ENCODE measurements at regions of chr16 and their contacts with region 1.

Region 1: DNA sequence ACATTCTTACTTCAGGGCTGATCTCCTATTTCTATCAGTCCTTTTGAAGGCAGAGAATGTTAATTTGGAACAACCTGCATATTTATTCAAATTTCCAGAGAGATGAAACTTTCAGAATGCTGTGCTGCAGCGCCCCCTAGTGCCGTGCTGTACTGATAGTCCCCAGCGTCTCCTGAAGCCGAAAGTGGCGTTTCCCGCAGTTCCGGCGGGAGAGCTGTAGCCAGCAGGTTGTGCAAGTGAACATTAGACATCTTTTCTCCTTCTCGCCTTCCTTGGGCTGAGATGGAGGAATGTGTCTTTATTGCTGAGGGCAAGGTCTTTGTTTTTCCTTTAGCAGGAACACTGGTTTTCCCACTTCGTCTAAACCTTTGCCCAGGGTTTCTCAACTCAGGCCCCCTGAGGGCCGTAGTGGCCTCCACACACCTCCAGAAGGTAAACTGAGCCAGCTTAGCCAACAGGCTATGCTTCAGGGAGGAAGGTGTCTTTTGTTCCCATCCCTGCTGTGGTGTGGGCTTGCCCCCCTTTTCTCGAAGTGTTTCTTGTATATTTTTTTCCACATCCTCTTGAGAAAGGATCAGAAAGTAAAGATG is 26.4 kb downstream of the USP10 start:
- DNase-seq: peak; percentile 86
- ATAC-seq: peak; percentile 72
- H3K4me3 Mint-ChIP-seq: peak overlapping the region; percentile 52
- H3K27ac Mint-ChIP-seq: no peak overlapping the region
- H3K4me1 Mint-ChIP-seq: peaks cover 72% of the 10 kb centered on the region
- H3K27me3 Mint-ChIP-seq: no peaks in the 10 kb centered on the region

Region 2: DNA sequence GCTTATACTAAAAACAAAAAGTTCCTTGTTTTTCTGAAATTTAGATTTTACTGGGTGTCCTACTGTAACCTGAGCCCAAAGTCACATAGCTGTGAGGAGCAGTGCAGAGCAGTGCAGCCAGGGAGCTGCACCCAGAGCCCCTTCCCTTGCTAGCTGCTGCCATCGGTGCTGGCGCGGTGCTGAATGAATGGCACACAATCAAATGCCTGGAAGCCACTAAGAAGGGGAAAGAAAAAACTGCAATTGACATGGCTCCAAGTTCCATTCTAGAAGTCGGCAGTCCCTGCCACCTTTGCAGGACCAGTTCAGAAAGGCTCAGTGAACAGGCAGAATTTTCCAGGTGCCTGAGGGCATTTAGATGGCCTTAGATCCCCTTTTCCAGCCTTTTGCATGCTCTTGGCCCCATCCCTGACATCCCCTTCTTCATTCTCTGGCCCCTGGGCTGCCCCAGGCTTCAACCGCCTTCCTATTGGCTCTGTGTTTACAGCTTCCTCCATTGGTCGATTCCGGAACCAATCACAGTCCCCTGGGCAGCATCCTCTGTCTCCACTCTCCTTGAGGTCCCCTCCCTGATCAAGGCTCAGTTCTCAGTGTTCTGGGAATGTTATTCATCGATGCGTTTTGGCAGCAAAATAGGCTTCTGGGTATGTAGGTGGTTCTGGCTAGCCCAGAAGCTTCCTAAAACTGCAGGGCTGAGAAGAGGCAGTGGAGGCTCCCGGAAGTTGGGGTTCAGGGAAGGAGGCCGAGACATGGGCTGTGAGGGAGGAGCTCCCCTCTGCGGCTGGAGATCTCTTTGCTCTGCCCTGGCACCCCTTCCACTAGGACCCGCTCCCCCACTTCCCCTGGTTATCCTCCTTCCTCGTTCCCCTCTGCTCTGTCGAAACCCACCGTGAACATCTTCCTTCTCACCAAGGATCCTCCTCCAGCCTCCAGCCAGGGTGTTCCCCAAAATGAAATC is 319.9 kb before region 1 on chr16:
- CTCF ChIA-PET with region 1: no interaction called
- DNase-seq: no peak
- ATAC-seq: no peak
- H3K4me3 Mint-ChIP-seq: no peak overlapping the region
- H3K27ac Mint-ChIP-seq: no peak overlapping the region
- H3K4me1 Mint-ChIP-seq: no peaks in the 10 kb centered on the region
- H3K27me3 Mint-ChIP-seq: peaks cover 38% of the 10 kb centered on the region

Region 3: GRCh38 chr16:84617791-84618580 is 108.2 kb before region 1 on chr16 and contains the start of gene COTL1:
- CTCF ChIA-PET with region 1: interaction called, 38 read pairs
- DNase-seq: peak; percentile 97
- ATAC-seq: peak; percentile 86
- H3K4me3 Mint-ChIP-seq: peak within 1 kb of the TSS; percentile 96
- H3K27ac Mint-ChIP-seq: peak within 1 kb of the TSS; percentile 87
- H3K4me1 Mint-ChIP-seq: peaks cover 41% of the 10 kb centered on the region
- H3K27me3 Mint-ChIP-seq: peaks cover 13% of the 10 kb centered on the region
- total RNA-seq, gene COTL1: 1,052 to 1,190 TPM

Region 4: DNA sequence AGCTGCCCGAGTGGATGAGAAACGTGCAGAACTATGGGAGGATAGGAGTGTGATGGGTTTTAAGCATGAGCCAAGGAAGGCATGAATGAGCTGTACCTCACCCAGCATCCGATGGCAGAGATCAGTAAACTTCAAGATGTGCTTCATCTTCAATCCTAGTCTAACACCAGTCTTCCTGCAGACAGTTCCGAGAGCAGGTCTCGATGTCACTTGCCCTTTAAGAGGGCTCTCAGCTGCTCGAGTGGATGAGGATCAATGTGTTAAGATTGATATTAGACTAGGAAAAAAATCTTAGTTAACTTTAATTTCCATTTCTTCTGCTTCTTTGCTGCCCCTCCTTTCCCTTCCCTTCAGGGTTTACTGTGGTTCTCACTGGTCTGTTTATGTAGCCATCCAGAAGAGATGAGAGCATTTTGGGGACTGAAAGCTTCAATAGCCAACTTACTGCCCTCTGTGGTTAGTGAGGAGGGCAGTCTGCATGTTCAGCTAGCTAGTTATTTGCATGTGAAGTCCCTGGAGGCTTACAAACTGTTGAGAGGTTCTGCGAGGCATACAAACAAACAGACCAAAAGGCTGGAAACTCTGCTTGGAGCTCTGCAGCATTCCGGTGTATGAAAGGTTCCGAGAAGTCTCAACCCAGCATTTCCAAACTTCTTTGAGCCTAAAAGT is 62.6 kb before region 1 on chr16:
- CTCF ChIA-PET with region 1: interaction called, 14 read pairs
- DNase-seq: no peak
- ATAC-seq: no peak
- H3K4me3 Mint-ChIP-seq: no peak overlapping the region
- H3K27ac Mint-ChIP-seq: no peak overlapping the region
- H3K4me1 Mint-ChIP-seq: peaks cover 11% of the 10 kb centered on the region
- H3K27me3 Mint-ChIP-seq: no peaks in the 10 kb centered on the region

Region 5: GRCh38 chr16:84687715-84688114 is 38.5 kb before region 1 on chr16:
- CTCF ChIA-PET with region 1: interaction called, 40 read pairs
- DNase-seq: no peak
- ATAC-seq: peak; percentile 66
- H3K4me3 Mint-ChIP-seq: no peak overlapping the region
- H3K27ac Mint-ChIP-seq: no peak overlapping the region
- H3K4me1 Mint-ChIP-seq: peaks cover 13% of the 10 kb centered on the region
- H3K27me3 Mint-ChIP-seq: peaks cover 26% of the 10 kb centered on the region

Region 6: GRCh38 chr16:84714028-84714427 is 12.1 kb before region 1 on chr16:
- CTCF ChIA-PET with region 1: interaction called, 73 read pairs
- DNase-seq: no peak
- ATAC-seq: no peak
- H3K4me3 Mint-ChIP-seq: no peak overlapping the region
- H3K27ac Mint-ChIP-seq: no peak overlapping the region
- H3K4me1 Mint-ChIP-seq: peaks cover 39% of the 10 kb centered on the region
- H3K27me3 Mint-ChIP-seq: no peaks in the 10 kb centered on the region

Region 7: GRCh38 chr16:84785843-84786581 is 59.8 kb after region 1 on chr16:
- CTCF ChIA-PET with region 1: no interaction called
- DNase-seq: no peak
- ATAC-seq: no peak
- H3K4me3 Mint-ChIP-seq: no peak overlapping the region
- H3K27ac Mint-ChIP-seq: no peak overlapping the region
- H3K4me1 Mint-ChIP-seq: no peaks in the 10 kb centered on the region
- H3K27me3 Mint-ChIP-seq: no peaks in the 10 kb centered on the region

Region 8: DNA sequence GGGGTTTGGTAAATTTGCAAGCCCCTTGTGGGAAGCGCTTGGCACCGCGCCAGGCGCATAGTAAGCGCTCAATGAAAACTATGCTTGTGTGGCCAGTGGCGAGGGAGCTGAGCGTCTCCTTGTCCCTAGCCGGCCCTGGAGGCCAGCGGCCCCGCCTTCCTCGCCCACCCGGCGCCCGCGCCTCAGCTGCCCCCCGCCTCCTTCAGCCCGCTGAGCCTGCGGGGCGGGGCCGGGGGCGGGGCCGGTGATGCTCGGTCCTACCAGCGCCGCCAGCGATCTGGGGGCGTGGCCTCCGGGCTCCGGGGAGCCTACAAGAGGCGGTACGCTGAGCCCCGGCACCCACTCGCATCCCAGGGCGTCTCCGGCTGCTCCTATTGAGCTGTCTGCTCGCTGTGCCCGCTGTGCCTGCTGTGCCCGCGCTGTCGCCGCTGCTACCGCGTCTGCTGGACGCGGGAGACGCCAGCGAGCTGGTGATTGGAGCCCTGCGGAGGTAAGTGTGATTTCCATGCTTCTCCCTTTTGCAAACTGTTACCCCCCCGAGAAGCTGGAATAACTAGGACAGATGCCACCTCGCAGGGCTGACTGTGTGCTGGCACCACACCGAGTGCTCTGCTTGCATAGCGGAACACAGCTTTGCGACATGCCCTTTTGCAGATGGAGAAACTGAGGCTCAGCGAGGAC is 93.6 kb after region 1 on chr16 and contains the start of gene CRISPLD2:
- CTCF ChIA-PET with region 1: no interaction called
- DNase-seq: peak; percentile 78
- ATAC-seq: peak; percentile 99
- H3K4me3 Mint-ChIP-seq: no peak within 1 kb of the TSS
- H3K27ac Mint-ChIP-seq: no peak within 1 kb of the TSS
- H3K4me1 Mint-ChIP-seq: peaks cover 7% of the 10 kb centered on the region
- H3K27me3 Mint-ChIP-seq: peaks cover 58% of the 10 kb centered on the region
- total RNA-seq, gene CRISPLD2: not detected